CD4-positive, alpha-beta memory T cell (primary cell): ENCODE measurements at regions of chr19 and their contacts with region 1.

Region 1: DNA sequence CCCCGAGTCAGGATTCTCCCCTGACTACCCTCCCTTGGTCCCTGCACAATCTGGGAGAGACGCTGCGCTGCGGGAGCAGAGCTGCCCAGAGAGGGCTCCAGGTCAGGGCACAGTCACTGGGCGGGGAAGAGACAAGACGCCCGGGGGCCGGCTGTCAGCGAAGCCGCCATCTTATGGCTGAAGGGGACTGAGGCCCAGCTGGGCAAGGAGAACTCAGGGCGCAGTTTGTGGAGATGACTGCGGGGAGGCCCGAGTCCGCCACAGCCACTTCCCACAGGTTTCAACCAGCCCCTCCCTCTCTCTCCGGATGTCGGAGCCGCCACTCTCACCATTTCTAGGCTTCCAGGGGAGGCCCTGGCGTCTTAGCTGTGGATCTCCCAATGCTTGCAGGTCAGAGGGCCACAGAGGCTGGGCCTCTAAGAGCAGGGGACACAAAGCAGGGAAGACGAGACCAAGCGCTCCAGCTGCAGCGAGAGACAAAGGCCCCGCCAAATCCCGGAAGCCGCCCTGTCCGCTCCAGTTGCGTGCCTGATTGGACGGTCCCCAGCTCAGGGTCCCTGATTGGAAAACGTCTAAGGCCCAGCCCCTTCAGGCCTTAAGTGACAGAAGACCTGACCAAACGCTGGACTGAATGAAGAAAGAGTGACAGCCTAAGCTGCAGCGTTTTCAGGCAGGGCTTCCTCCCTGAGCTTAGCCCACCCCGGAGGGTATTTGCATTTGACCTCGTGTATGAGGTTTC is at the start of gene ZNF724:
- DNase-seq: peak; percentile 87 to 93 (median 89)
- H3K4me3 ChIP-seq: peak within 1 kb of the TSS; percentile 78 to 81
- H3K4me3 Mint-ChIP-seq: peak within 1 kb of the TSS; percentile 95 to 98 (median 97)
- H3K27ac ChIP-seq: peak within 1 kb of the TSS; percentile 63
- H3K27ac Mint-ChIP-seq: peak within 1 kb of the TSS; percentile 82 to 96 (median 93)
- H3K4me1 ChIP-seq: peaks cover 8% of the 10 kb centered on the region
- H3K4me1 Mint-ChIP-seq: peaks cover 5 to 18% (median 7%) of the 10 kb centered on the region in 4 donors
- H3K27me3 ChIP-seq: no peaks in the 10 kb centered on the region
- H3K27me3 Mint-ChIP-seq: no peaks in the 10 kb centered on the region
- total RNA-seq, gene ZNF724: 5.5 to 6.1 TPM

Region 2: GRCh38 chr19:23914402-23915301 is 664.6 kb after region 1 on chr19 and contains the start of gene ZNF726:
- CTCF ChIA-PET with region 1: no interaction called
- POLR2A ChIA-PET with region 1: interaction called, 5 read pairs
- intact Hi-C with region 1: loop called (anchors 10 kb)
- DNase-seq: peak; percentile 88 to 92 (median 89)
- H3K4me3 ChIP-seq: peak within 1 kb of the TSS; percentile 53 to 59
- H3K4me3 Mint-ChIP-seq: peak within 1 kb of the TSS; percentile 93 to 97 (median 95)
- H3K27ac ChIP-seq: peak within 1 kb of the TSS; percentile 53
- H3K27ac Mint-ChIP-seq: peak within 1 kb of the TSS; percentile 90 to 96 (median 91)
- H3K4me1 ChIP-seq: no peaks in the 10 kb centered on the region
- H3K4me1 Mint-ChIP-seq: peaks cover 6 to 24% (median 15%) of the 10 kb centered on the region in 4 donors
- H3K27me3 ChIP-seq: no peaks in the 10 kb centered on the region
- H3K27me3 Mint-ChIP-seq: no peaks in the 10 kb centered on the region
- total RNA-seq, gene ZNF726: 3.0 to 3.3 TPM